ENCODE measurements at regions of chr15 and their contacts with region 1.

Region 1: GRCh38 chr15:38563723-38564519 is 693 bp downstream of the RASGRP1 start:
- DNase-seq: no peak
- H3K4me3 ChIP-seq: peak overlapping the region; percentile 64
- CTCF ChIP-seq: peak; percentile 97

Region 2: GRCh38 chr15:38461066-38461833 is 102.7 kb before region 1 on chr15:
- CTCF ChIA-PET with region 1: interaction called, 10 read pairs
- POLR2A ChIA-PET with region 1: no interaction called
- DNase-seq: no peak
- H3K4me3 ChIP-seq: no peak overlapping the region
- CTCF ChIP-seq: no peak

Region 3: DNA sequence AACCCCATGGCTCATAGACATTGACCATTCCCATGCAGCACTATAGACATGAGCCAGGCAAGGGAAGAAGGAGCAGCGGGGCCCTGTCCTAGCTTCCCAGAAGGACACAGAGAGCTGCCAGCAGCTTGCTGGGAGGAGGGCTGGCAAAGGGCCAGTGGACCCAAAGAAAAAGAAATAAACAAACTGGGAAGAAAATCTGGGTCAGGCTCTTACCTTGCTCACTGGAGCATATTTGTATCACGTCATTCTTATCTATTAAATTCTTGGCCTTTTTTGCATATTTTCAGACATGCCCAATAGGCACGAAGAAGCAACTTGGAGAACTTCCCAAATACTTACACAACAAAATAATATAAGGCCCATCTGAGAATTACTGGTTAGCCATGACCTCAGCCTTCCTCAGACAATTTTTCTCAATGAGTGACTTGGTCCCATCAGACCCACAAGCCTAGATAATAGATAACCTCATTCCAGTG is 27.7 kb before region 1 on chr15:
- CTCF ChIA-PET with region 1: interaction called, 20 read pairs
- POLR2A ChIA-PET with region 1: interaction called, 3 read pairs
- DNase-seq: peak; percentile 100
- H3K4me3 ChIP-seq: no peak overlapping the region
- CTCF ChIP-seq: no peak

Region 4: DNA sequence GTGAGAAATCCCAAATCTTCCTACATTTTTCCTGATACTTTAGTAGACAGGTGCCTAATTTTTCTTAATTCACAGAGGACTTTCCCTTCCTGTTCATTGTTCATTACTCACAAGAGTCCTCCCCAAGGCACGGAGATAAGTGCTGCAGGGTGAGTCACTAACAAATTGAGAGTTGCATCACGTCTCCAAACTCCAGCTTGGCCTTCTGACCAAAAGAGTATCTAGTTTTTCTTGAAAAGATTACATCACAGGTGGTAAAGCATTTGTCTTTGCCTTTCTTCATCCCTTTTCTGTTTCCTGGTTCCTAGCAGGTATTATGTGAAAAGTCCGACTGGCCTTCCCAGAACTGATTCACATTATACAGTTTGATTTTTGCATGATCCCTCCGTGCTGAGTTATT is 25.6 kb after region 1 on chr15:
- CTCF ChIA-PET with region 1: interaction called, 37 read pairs
- POLR2A ChIA-PET with region 1: no interaction called
- DNase-seq: peak; percentile 57
- H3K4me3 ChIP-seq: no peak overlapping the region
- CTCF ChIP-seq: no peak

Region 5: DNA sequence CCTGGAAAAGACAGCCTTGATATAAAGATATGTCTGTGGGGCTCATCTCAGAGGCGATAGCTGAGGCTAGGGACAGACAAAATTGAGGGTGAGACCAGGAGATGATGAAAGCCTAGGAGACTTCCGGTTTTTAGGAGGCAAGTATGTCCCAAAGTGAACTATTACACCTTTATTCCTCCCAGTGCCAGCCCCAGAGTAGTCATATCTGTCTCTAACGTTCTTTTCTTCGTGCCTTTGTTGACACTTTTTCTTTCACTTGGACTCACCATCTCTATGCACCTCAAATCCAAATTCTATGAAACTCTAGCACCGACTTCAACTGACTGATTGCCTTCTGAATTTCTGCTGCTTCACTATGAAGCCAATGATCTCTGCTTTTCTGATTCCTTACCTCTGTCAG is 94.5 kb after region 1 on chr15:
- CTCF ChIA-PET with region 1: interaction called, 11 read pairs
- POLR2A ChIA-PET with region 1: no interaction called
- DNase-seq: no peak
- H3K4me3 ChIP-seq: no peak overlapping the region
- CTCF ChIP-seq: no peak

Region 6: GRCh38 chr15:38690689-38691332 is 126.9 kb after region 1 on chr15:
- CTCF ChIA-PET with region 1: interaction called, 40 read pairs
- POLR2A ChIA-PET with region 1: interaction called, 3 read pairs
- DNase-seq: no peak
- H3K4me3 ChIP-seq: no peak overlapping the region
- CTCF ChIP-seq: peak; percentile 77